ENCODE measurements at regions of chr10 and their contacts with region 1.

Region 1: DNA sequence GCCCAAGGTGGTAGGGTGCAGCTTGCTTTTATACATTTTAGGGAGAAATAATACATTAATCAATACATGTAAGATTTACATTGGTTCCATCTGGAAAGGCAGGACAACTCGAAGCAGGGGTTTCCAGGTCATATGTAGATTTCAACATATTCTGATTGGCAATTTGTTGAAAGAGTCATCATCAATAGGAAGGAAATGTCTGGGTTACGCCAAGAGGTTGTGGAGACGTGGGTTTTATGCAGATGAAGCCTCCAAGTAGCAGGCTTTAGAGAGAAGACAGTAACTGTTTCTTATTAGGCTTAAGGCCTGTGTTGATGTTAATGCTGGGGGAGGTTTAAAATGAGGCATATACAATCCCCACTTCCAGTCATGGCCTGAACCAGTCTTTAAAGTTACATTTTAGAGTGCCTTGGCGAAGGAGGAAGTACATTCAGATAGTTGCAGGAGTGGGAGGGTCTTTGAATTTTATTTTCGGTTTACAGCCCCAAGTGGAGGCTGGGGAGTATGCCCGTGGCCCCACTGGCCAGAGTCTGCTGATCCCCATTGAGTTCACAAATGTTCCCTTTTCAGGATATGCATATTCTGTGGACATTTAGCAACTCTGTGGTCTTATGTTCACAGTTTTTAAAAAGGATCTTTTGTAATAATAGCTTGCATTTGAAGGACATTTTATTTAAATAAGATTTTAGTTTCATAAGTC is 166.0 kb upstream of the GDF10 start:
- DNase-seq: no peak
- H3K4me3 ChIP-seq: no peak overlapping the region
- CTCF ChIP-seq: no peak

Region 2: GRCh38 chr10:47095848-47096612 is 38.0 kb before region 1 on chr10:
- in situ Hi-C with region 1: loop called (anchors 5 kb)
- DNase-seq: no peak
- H3K4me3 ChIP-seq: no peak overlapping the region
- CTCF ChIP-seq: no peak

Region 3: DNA sequence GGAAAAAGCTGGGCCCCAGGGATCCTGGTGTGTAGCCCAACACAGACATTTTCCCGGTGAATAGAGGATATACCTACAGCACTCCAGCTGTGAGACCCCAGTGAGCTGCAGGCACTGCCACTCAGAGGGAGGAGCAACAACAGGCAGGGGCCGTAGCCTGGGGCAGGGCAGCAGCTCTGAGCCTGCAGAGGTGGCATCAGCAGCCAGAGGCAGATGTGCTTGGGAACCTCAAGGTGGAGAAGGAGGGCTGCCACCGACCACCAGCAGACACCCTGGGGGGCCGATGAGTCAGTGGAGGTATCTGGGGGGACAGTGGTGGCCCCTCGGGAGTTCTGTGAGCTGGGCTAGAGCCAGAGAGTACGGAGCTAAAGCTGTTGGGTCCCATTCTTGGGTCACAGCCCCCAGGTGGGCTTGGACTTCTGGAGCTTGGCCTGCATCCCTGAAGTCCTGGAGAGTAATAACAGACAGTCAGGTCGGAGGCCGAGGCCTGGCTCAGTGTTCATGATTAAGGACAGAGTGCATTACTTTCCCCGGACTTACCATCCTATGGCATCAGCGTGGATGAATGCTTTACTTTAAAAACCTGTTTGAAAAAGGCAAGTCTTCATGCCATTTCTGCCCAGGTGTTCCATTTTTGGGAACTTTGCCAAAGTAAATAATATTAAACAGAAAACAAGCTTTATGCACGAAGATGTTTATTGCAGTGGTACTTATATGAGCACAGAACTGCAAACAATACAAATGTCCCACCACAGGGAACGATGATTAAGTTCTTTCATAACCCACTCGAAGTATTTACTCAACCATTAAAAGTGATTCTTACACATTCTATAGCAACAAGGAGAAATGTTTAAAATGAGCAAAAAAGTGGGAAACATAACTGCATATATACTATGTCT is 56.0 kb after region 1 on chr10:
- in situ Hi-C with region 1: loop called (anchors 5 kb)
- DNase-seq: no peak
- H3K4me3 ChIP-seq: no peak overlapping the region
- CTCF ChIP-seq: no peak